Gastrocnemius medialis (tissue), 4 donors: ENCODE measurements at regions of chr3 and their contacts with region 1.

Region 1: GRCh38 chr3:99875929-99876841 is 58.5 kb downstream of the CMSS1 start:
- DNase-seq: peak; percentile 48 to 74
- ATAC-seq: peak; percentile 72 to 82
- H3K4me3 ChIP-seq: peak overlapping the region; percentile 70 to 89 (median 77)
- H3K27ac ChIP-seq: peak overlapping the region; percentile 83 to 93 (median 91)
- H3K4me1 ChIP-seq: peaks cover 59 to 76% of the 10 kb centered on the region in 2 donors
- H3K27me3 ChIP-seq: no peaks in the 10 kb centered on the region
- CTCF ChIP-seq: peak in 1 of 5 experiments; percentile 19
- POLR2A ChIP-seq: peak; percentile 82 to 93

Region 2: DNA sequence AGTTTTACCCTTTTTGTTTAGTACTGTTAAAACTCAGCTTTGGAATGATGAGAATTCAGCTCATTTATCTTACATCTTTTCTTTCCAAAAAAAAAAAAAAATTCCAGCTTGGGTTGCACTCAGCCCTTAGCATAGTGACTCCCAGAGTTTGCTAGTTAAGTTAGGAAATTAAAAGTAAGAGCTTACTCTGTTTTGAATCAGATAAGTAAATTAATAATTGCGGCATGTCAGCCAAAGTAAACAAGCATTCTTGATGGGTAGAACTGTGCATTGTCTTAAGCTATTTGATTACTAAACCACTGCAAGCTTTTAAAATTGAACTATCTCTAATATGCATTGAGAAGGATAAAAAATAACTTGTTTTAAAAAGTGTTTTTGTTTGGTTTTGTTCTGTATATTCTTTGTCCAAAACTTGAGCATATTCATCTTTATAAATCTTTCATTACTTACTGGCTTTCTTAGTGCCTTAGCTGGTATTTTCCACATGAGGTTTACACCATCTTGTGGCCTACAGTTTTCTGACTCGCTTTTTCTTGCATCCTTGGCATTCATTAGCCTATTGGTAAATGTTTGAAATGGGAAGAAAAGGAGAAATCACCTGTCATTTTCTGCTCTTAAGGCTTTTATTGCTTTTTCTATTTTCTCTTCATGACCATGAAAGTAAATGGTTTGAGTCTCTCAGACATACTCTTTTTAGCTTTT is 130.5 kb after region 1 on chr3:
- in situ Hi-C with region 1: no loop called
- intact Hi-C with region 1: loop called (anchors 5 kb)
- DNase-seq: no peak
- ATAC-seq: no peak
- H3K4me3 ChIP-seq: no peak overlapping the region
- H3K27ac ChIP-seq: peak overlapping the region; percentile 41 to 53 (median 46)
- H3K4me1 ChIP-seq: peaks cover 60 to 65% of the 10 kb centered on the region in 2 donors
- H3K27me3 ChIP-seq: no peaks in the 10 kb centered on the region
- CTCF ChIP-seq: peak in 1 of 5 experiments; percentile 15
- POLR2A ChIP-seq: no peak

Region 3: DNA sequence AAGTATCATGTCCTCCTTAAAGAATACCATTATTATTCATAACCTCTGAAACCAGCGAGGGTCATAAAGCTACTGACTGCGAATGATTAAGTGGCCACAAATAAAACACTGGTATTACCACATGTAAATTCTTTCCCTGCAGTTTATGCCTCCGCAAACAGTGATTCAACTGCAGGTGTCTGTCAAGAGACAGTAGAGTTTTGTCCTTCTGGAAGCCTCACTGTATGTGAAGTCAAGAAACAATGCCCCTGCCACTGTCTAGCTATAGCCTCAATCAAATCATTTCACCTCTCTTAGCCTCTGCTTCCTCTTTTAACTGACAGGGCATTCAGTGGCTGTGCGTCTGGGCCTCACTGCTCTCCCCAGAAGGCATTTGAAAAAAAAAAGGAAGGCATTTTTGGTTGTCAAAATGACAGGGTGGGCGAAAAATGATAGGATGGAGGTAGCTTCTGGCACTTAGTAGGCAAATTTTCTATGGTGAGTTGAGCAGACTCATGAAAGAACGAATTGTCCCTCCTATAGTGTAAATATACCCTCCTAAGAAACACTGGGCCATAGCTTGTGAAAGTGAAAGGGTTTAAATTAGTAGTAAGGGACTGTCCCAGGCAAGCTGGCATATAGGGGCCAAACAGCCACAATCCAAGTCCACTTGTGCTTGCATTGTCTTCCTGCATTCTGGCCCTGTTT is 171.4 kb after region 1 on chr3:
- in situ Hi-C with region 1: no loop called
- intact Hi-C with region 1: loop called (anchors 5 kb)
- DNase-seq: peak; percentile 35 to 40
- ATAC-seq: peak; percentile 90 to 92
- H3K4me3 ChIP-seq: peak overlapping the region; percentile 24 to 39 (median 32)
- H3K27ac ChIP-seq: peak overlapping the region; percentile 87 to 94 (median 88)
- H3K4me1 ChIP-seq: peaks cover 59 to 64% of the 10 kb centered on the region in 2 donors
- H3K27me3 ChIP-seq: no peaks in the 10 kb centered on the region
- CTCF ChIP-seq: no peak
- POLR2A ChIP-seq: peak in 1 of 2 donors; percentile 35